IMR-90 (cell line): ENCODE measurements at regions of chr3 and their contacts with region 1.

Region 1: GRCh38 chr3:69161587-69162307 is 39.4 kb upstream of the LMOD3 start:
- DNase-seq: peak; percentile 53
- ATAC-seq: peak; percentile 91
- H3K4me3 ChIP-seq: no peak overlapping the region
- H3K27ac ChIP-seq: no peak overlapping the region
- H3K4me1 ChIP-seq: no peaks in the 10 kb centered on the region
- H3K27me3 ChIP-seq: peaks cover 16% of the 10 kb centered on the region
- CTCF ChIP-seq: peak; percentile 94
- POLR2A ChIP-seq: no peak
- RAD21 ChIP-seq: peak; percentile 96

Region 2: GRCh38 chr3:69200384-69201068 is 38.8 kb after region 1 on chr3:
- CTCF ChIA-PET with region 1: no interaction called
- POLR2A ChIA-PET with region 1: no interaction called
- dilution Hi-C with region 1: no loop called
- in situ Hi-C with region 1: no loop called
- intact Hi-C with region 1: loop called (anchors 1 kb)
- DNase-seq: peak; percentile 19
- ATAC-seq: peak; percentile 14; the same call in 1 of the 2 replicates
- H3K4me3 ChIP-seq: no peak overlapping the region
- H3K27ac ChIP-seq: no peak overlapping the region
- H3K4me1 ChIP-seq: no peaks in the 10 kb centered on the region
- H3K27me3 ChIP-seq: peaks cover 15% of the 10 kb centered on the region
- CTCF ChIP-seq: no peak
- POLR2A ChIP-seq: no peak
- RAD21 ChIP-seq: no peak

Region 3: GRCh38 chr3:69306239-69307185 is 144.8 kb after region 1 on chr3:
- CTCF ChIA-PET with region 1: interaction called, 51 read pairs
- POLR2A ChIA-PET with region 1: no interaction called
- dilution Hi-C with region 1: no loop called
- in situ Hi-C with region 1: loop called (anchors 5 kb)
- intact Hi-C with region 1: loop called (anchors 1 kb)
- DNase-seq: peak; percentile 83
- ATAC-seq: peak; percentile 100
- H3K4me3 ChIP-seq: no peak overlapping the region
- H3K27ac ChIP-seq: no peak overlapping the region
- H3K4me1 ChIP-seq: no peaks in the 10 kb centered on the region
- H3K27me3 ChIP-seq: no peaks in the 10 kb centered on the region; the same call in 1 of the 2 replicates
- CTCF ChIP-seq: peak; percentile 88
- POLR2A ChIP-seq: no peak
- RAD21 ChIP-seq: peak; percentile 91

Region 4: DNA sequence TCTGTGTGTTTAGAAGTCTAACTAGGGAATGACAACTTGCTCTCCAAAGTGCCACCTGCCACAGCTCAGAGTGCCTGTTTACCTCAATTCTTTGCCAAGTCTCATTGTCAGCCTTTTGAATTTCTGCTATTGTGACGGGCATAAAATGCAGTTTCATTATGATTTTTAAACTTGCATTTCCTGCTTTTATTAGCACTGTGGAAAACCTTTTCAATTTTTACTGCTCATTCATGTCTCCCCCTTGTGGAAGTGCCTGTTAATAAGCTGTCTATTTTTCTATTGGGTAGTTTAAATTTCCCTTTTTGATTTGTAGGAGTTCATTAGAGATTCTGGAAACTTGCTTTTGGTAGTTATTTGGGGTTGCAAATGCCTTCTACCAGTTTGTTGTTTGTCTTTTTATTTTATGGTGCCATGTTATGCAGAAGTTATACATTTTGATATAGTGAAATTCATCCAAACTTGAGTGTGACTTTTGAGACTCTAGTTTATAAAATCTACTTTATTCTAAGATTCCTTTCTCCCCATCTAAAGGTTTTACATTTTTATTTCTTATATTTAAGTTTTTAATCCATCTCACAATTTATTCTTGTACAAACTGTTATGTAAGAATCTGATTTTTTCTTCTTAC is 278.0 kb after region 1 on chr3:
- CTCF ChIA-PET with region 1: no interaction called
- POLR2A ChIA-PET with region 1: interaction called, 28 read pairs
- dilution Hi-C with region 1: no loop called
- in situ Hi-C with region 1: loop called (anchors 10 kb)
- intact Hi-C with region 1: no loop called
- DNase-seq: peak; percentile 30
- ATAC-seq: peak; percentile 68
- H3K4me3 ChIP-seq: no peak overlapping the region
- H3K27ac ChIP-seq: no peak overlapping the region
- H3K4me1 ChIP-seq: peaks cover 4% of the 10 kb centered on the region; the same call in 1 of the 2 replicates
- H3K27me3 ChIP-seq: no peaks in the 10 kb centered on the region
- CTCF ChIP-seq: peak; percentile 60
- POLR2A ChIP-seq: no peak
- RAD21 ChIP-seq: peak; percentile 35; the same call in 1 of the 2 replicates

Region 5: GRCh38 chr3:69806735-69807438 is 645.1 kb after region 1 on chr3:
- CTCF ChIA-PET with region 1: no interaction called
- POLR2A ChIA-PET with region 1: interaction called, 3 read pairs
- dilution Hi-C with region 1: no loop called
- in situ Hi-C with region 1: no loop called
- intact Hi-C with region 1: loop called (anchors 5 kb)
- DNase-seq: peak; percentile 85
- ATAC-seq: peak; percentile 80
- H3K4me3 ChIP-seq: no peak overlapping the region
- H3K27ac ChIP-seq: peak overlapping the region; percentile 77
- H3K4me1 ChIP-seq: peaks cover 18% of the 10 kb centered on the region
- H3K27me3 ChIP-seq: no peaks in the 10 kb centered on the region
- CTCF ChIP-seq: no peak
- POLR2A ChIP-seq: no peak
- RAD21 ChIP-seq: no peak

Region 6: DNA sequence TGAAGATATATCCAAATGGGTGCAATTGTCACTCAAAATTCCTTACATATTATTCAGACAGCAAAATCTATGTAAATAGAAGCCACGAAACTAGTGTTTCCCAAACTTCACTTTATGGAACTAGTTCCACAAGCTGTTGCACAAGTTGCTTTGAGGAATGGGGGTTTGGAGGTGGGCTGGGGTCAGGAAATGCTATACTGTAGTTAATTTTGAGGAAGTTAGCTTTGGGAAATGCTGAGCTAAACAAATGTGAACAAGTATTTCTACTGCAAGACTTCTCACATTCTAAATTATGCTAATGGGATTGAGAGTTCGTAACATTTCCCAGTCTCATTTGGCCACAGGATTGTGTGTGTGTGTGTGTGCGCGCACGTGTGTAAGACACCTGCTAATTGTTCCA is 809.1 kb after region 1 on chr3:
- CTCF ChIA-PET with region 1: no interaction called
- POLR2A ChIA-PET with region 1: no interaction called
- dilution Hi-C with region 1: no loop called
- in situ Hi-C with region 1: loop called (anchors 25 kb)
- intact Hi-C with region 1: no loop called
- DNase-seq: no peak
- ATAC-seq: no peak; the same call in 1 of the 2 replicates
- H3K4me3 ChIP-seq: no peak overlapping the region
- H3K27ac ChIP-seq: no peak overlapping the region
- H3K4me1 ChIP-seq: no peaks in the 10 kb centered on the region
- H3K27me3 ChIP-seq: no peaks in the 10 kb centered on the region
- CTCF ChIP-seq: no peak
- POLR2A ChIP-seq: no peak
- RAD21 ChIP-seq: no peak